Natural killer cell (primary cell): ENCODE measurements at regions of chr13 and their contacts with region 1.

Region 1: DNA sequence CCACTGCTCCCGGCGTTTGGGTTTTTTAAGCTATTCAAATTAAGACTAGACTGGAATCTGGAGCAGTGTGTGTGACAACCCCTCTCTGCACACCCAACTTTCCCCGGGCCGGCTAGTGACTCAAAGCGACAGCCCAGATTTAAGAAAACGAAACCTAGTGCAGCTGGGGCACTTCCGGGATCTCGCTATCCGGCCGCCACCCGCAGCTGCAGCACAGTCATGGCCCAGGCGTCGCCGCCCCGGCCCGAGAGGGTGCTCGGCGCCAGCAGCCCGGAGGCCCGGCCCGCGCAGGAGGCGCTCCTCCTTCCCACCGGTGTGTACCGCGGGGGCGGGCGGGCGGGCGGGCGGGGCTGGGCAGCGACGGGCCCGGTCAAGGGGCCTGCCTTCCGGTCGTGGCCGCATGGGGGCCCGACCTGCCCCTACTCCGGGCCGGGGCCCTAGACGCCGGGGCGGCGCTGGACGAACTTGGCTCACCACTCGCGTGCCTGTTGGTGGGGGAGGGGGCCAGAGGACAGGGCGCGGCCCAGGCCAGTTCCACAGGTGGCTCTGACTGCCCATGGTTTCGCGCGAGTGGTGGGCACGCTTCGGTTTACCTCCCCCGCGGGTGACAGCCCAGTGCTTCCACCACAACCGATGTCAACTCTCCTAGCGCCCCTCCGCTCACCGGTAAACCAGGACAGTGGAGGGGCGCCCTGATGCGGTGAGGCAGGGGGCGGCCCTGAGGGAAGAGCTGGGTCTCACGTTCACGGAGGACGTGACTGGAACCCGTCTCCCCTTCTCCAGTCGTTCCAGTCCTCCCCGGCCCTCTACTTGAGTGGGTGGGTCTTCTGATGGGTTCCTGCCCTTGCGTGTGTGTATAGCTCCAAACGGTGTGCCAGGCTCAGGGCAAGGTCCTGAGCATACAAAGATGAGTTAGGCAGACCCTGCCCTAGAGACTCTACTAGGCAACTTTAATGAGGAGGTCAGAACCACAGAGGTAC is at the start of gene PHF11:
- DNase-seq: peak; percentile 83 to 93
- ATAC-seq: peak; percentile 82 to 93 (median 89)
- H3K4me3 ChIP-seq: peak within 1 kb of the TSS; percentile 71
- H3K4me3 Mint-ChIP-seq: peak within 1 kb of the TSS; percentile 97
- H3K27ac ChIP-seq: peak within 1 kb of the TSS; percentile 95
- H3K27ac Mint-ChIP-seq: peak within 1 kb of the TSS; percentile 81 to 97
- H3K4me1 ChIP-seq: peaks cover 20% of the 10 kb centered on the region
- H3K4me1 Mint-ChIP-seq: peaks cover 36 to 39% of the 10 kb centered on the region in 2 donors
- H3K27me3 ChIP-seq: no peaks in the 10 kb centered on the region
- H3K27me3 Mint-ChIP-seq: no peaks in the 10 kb centered on the region
- CTCF ChIP-seq: no peak
- total RNA-seq, gene PHF11: 89.0 to 113 (median 111) TPM

Region 2: GRCh38 chr13:49792550-49793324 is 296.7 kb after region 1 on chr13 and contains the start of gene KPNA3:
- intact Hi-C with region 1: loop called (anchors 5 kb)
- DNase-seq: peak; percentile 90 to 98
- ATAC-seq: peak; percentile 87 to 96 (median 87)
- H3K4me3 ChIP-seq: peak within 1 kb of the TSS; percentile 66
- H3K4me3 Mint-ChIP-seq: peak within 1 kb of the TSS; percentile 94
- H3K27ac ChIP-seq: peak within 1 kb of the TSS; percentile 66
- H3K27ac Mint-ChIP-seq: peak within 1 kb of the TSS; percentile 95 to 96
- H3K4me1 ChIP-seq: peaks cover 14% of the 10 kb centered on the region
- H3K4me1 Mint-ChIP-seq: peaks cover 37 to 39% of the 10 kb centered on the region in 2 donors
- H3K27me3 ChIP-seq: no peaks in the 10 kb centered on the region
- H3K27me3 Mint-ChIP-seq: peaks cover 12 to 16% of the 10 kb centered on the region in 2 donors
- CTCF ChIP-seq: no peak
- total RNA-seq, gene KPNA3: 27.8 to 35.5 (median 29.8) TPM